ENCODE measurements at regions of chr7 and their contacts with region 1.

Region 1: DNA sequence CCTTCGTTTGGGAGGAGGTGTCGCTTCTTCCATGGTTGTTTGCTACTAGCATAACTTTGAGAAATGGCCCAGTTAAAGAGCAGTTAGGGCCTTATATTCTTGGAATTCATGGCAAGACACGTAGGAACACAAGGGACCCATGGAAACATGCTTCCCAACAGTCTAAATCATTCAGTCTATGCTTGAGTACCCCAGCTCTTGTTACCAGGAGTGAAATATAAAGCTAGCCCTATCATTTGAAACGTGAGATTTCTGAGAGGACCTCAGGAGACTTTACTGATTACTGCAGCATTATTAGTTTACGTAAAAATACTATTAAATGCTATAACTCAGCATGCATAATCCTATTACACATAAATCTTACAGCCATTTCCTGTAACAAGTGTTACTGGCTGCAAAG is 328.6 kb upstream of the CDC14C start:
- DNase-seq: no peak
- H3K4me3 ChIP-seq: no peak overlapping the region
- CTCF ChIP-seq: no peak
- POLR2A ChIP-seq: no peak

Region 2: DNA sequence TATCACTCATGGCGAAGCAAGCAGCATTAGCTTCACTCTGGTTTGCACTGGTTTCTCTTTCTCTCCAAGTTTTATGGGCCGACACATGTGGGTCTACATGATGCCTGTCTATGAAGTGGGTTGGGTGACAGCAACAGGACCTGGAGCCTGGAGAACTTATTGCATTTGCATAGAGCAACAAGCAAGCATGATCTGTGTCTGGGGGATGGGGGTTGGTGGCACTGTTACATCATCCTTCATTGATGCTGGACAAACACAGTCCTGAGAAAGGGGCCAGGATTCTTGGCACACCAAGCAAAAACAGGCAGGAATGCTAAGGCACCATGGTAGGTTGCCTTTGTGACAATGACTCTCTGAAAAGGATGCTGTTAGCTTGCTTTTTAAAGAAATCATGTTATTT is 62.4 kb after region 1 on chr7:
- intact Hi-C with region 1: loop called (anchors 2 kb)
- DNase-seq: no peak
- H3K4me3 ChIP-seq: no peak overlapping the region
- CTCF ChIP-seq: no peak
- POLR2A ChIP-seq: no peak

Measured in lower leg skin (tissue), 4 donors.